Transverse colon (tissue), 4 donors: ENCODE measurements at regions of chr18 and their contacts with region 1.

Region 1: DNA sequence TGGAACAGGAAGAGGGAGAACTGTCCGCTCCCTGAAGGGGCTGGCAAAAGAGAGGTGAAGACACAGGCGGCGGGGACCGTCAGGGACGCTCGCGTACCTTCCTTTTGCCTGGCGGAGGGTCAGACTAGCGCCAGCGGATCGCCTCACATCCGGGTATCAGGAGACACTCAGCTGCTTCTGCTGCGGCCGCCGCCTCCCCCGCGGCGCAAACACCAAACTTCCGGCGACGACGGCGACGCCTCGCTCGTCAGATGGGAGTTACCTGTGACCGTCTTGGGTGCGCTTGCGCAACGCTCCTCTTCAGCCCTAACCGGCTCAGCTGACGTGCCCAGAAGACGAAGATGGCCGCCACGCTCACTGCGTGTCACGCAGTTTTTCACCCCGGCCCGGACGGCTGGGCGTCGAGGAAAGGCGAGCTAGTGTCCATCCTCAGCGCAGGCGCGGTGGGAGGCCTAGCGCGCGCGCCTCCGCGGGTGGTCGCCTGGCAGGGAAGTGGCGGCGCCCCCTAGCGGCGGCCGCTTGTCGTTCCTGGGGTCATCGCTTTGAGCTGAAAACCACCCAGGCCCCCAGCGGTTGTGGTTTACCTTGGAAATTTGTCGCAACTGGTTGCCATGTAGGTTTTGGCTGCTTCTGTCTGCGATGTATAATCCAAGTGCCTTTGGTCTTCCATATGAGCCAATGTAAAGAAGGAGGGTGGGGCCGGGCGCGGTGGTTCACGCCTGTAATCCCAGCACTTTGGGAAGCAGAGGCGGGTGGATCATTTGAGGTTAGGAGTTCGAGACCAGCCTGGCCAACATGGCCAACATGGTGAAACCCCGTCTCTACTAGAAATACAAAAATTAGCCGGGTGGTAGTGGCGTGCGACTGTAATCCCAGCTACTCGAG is at the start of gene ESCO1:
- DNase-seq: peak; percentile 97
- H3K4me3 ChIP-seq: peak within 1 kb of the TSS; percentile 64 to 83 (median 77)
- H3K27ac ChIP-seq: peak within 1 kb of the TSS; percentile 92 to 99 (median 98)
- H3K4me1 ChIP-seq: peaks cover 3 to 33% (median 7%) of the 10 kb centered on the region in 4 donors
- H3K27me3 ChIP-seq: no peaks in the 10 kb centered on the region
- CTCF ChIP-seq: peak; percentile 99 to 100 (median 99)
- EP300 ChIP-seq: peak; percentile 4
- POLR2A ChIP-seq: peak; percentile 97
- total RNA-seq, gene ESCO1: 7.1 to 39.0 (median 18.6) TPM

Region 2: GRCh38 chr18:21452796-21453510 is 147.8 kb before region 1 on chr18:
- in situ Hi-C with region 1: no loop called
- intact Hi-C with region 1: no loop called
- DNase-seq: no peak
- H3K4me3 ChIP-seq: no peak overlapping the region
- H3K27ac ChIP-seq: peak overlapping the region in 2 of 4 donors; percentile 24 to 41
- H3K4me1 ChIP-seq: peaks cover 0 to 8% (median 0%) of the 10 kb centered on the region in 4 donors
- H3K27me3 ChIP-seq: no peaks in the 10 kb centered on the region
- CTCF ChIP-seq: no peak
- EP300 ChIP-seq: no peak
- POLR2A ChIP-seq: no peak

Region 3: GRCh38 chr18:21548637-21549036 is 52.1 kb before region 1 on chr18:
- in situ Hi-C with region 1: no loop called
- intact Hi-C with region 1: no loop called
- DNase-seq: no peak
- H3K4me3 ChIP-seq: no peak overlapping the region
- H3K27ac ChIP-seq: no peak overlapping the region
- H3K4me1 ChIP-seq: no peaks in the 10 kb centered on the region
- H3K27me3 ChIP-seq: no peaks in the 10 kb centered on the region
- CTCF ChIP-seq: no peak
- EP300 ChIP-seq: no peak
- POLR2A ChIP-seq: no peak

Region 4: GRCh38 chr18:21704603-21705364 is 104.0 kb after region 1 on chr18 and contains the start of gene ABHD3:
- in situ Hi-C with region 1: loop called in 2 of 4 experiments (anchors 25 kb)
- intact Hi-C with region 1: no loop called
- DNase-seq: peak; percentile 97
- H3K4me3 ChIP-seq: peak within 1 kb of the TSS; percentile 62 to 95 (median 77)
- H3K27ac ChIP-seq: peak within 1 kb of the TSS; percentile 95 to 99 (median 97)
- H3K4me1 ChIP-seq: peaks cover 4 to 14% (median 9%) of the 10 kb centered on the region in 4 donors
- H3K27me3 ChIP-seq: no peaks in the 10 kb centered on the region
- CTCF ChIP-seq: peak; percentile 56 to 93 (median 65)
- EP300 ChIP-seq: no peak
- POLR2A ChIP-seq: peak; percentile 95
- total RNA-seq, gene ABHD3: 59.8 to 611 (median 122) TPM